Common myeloid progenitor, CD34-positive (primary cell): ENCODE measurements at regions of chr22 and their contacts with region 1.

Region 1: GRCh38 chr22:22884010-22884887 is 3.4 kb upstream of the IGLL5 start:
- DNase-seq: peak; percentile 80 to 88 (median 82)
- H3K4me3 ChIP-seq: no peak overlapping the region
- H3K27ac ChIP-seq: no peak overlapping the region
- H3K4me1 ChIP-seq: peaks cover 0 to 7% (median 1%) of the 10 kb centered on the region in 4 experiments
- H3K27me3 ChIP-seq: peaks cover 0 to 8% (median 0%) of the 10 kb centered on the region in 5 experiments

Region 2: GRCh38 chr22:22748297-22748743 is 135.9 kb before region 1 on chr22:
- CTCF ChIA-PET with region 1: interaction called, 27 read pairs
- POLR2A ChIA-PET with region 1: no interaction called
- DNase-seq: peak in 2 of 3 donors; percentile 59 to 61
- H3K4me3 ChIP-seq: no peak overlapping the region
- H3K27ac ChIP-seq: no peak overlapping the region
- H3K4me1 ChIP-seq: peaks cover 0 to 10% (median 8%) of the 10 kb centered on the region in 4 experiments
- H3K27me3 ChIP-seq: peaks cover 0 to 7% (median 3%) of the 10 kb centered on the region in 5 experiments

Region 3: DNA sequence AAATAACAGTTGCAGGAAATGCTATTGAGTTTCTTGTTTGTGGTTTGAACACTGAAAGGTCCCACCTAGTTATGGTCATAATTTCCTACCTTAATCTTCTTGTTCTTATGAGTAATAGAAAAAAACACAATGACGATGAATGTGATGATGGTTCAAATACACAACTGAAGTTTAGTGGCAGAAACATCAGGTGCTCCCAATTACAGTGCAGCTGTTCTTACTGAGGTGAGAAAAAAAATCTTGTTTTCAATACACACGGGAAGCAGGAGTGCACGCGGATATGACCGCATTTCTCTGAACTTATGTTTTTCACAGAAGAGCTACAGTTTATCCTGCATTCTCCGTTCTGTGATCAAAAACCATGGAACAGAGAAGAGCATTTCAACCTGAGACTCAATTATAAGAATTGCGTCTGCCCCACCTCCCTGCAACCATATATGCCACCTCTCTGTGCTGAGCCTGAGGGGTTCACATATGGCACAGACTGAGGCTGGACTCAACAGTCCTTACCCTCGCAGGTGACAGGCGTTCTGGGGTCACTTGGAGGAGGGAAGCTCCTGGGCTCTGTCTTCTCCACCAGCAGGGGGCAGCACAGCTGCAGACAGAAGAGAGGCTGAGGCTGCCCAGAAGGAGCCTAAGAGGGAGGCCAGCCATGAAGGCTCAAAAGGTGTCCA is 96.3 kb before region 1 on chr22:
- CTCF ChIA-PET with region 1: interaction called, 49 read pairs
- POLR2A ChIA-PET with region 1: interaction called, 3 read pairs
- DNase-seq: peak; percentile 55 to 75 (median 69)
- H3K4me3 ChIP-seq: no peak overlapping the region
- H3K27ac ChIP-seq: no peak overlapping the region
- H3K4me1 ChIP-seq: peaks cover 0 to 3% (median 0%) of the 10 kb centered on the region in 4 experiments
- H3K27me3 ChIP-seq: peaks cover 0 to 1% (median 0%) of the 10 kb centered on the region in 5 experiments

Region 4: GRCh38 chr22:22815397-22816170 is 68.7 kb before region 1 on chr22:
- CTCF ChIA-PET with region 1: interaction called, 20 read pairs
- POLR2A ChIA-PET with region 1: no interaction called
- DNase-seq: peak in 2 of 3 donors; percentile 37 to 39
- H3K4me3 ChIP-seq: peak overlapping the region in 1 of 7 experiments; percentile 17
- H3K27ac ChIP-seq: no peak overlapping the region
- H3K4me1 ChIP-seq: peaks cover 3 to 64% (median 26%) of the 10 kb centered on the region in 4 experiments
- H3K27me3 ChIP-seq: no peaks in the 10 kb centered on the region

Region 5: DNA sequence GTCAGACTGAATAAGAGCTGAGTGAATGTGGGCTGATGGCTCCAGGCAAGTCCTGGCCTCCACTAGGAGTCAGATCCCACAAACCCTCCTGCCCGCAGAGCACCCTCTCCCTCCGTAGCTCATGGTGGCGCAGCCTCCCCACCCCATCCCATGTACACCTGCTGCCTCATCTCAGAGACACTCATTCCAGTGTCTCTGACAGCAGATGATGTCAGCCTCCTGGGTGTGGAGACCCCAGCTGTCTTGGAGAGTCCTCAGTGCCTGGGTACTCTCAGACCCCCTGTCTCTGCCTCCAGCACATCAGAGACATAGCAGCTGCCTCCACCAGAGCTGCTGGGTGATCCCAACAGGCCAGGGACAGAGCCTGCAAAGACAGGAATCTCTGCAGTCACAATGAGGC is 12.8 kb after region 1 on chr22:
- CTCF ChIA-PET with region 1: interaction called, 16 read pairs
- POLR2A ChIA-PET with region 1: interaction called, 6 read pairs
- DNase-seq: no peak
- H3K4me3 ChIP-seq: no peak overlapping the region
- H3K27ac ChIP-seq: no peak overlapping the region
- H3K4me1 ChIP-seq: peaks cover 0 to 8% (median under 1%) of the 10 kb centered on the region in 4 experiments
- H3K27me3 ChIP-seq: peaks cover 0 to 3% (median 0%) of the 10 kb centered on the region in 5 experiments

Region 6: GRCh38 chr22:22942511-22943329 is 58.5 kb after region 1 on chr22:
- CTCF ChIA-PET with region 1: interaction called, 31 read pairs
- POLR2A ChIA-PET with region 1: no interaction called
- DNase-seq: peak; percentile 81 to 89 (median 86)
- H3K4me3 ChIP-seq: no peak overlapping the region
- H3K27ac ChIP-seq: no peak overlapping the region
- H3K4me1 ChIP-seq: peaks cover 0 to 3% (median 0%) of the 10 kb centered on the region in 4 experiments
- H3K27me3 ChIP-seq: no peaks in the 10 kb centered on the region

Region 7: GRCh38 chr22:23069502-23070357 is 185.5 kb after region 1 on chr22:
- CTCF ChIA-PET with region 1: no interaction called
- POLR2A ChIA-PET with region 1: no interaction called
- DNase-seq: peak; percentile 88 to 94 (median 93)
- H3K4me3 ChIP-seq: peak overlapping the region; percentile 19 to 71 (median 56)
- H3K27ac ChIP-seq: no peak overlapping the region
- H3K4me1 ChIP-seq: peaks cover 0 to 24% (median 19%) of the 10 kb centered on the region in 4 experiments
- H3K27me3 ChIP-seq: peaks cover 0 to 39% (median 23%) of the 10 kb centered on the region in 5 experiments